Stomach (tissue), 19 donors: ENCODE measurements at regions of chr9 and their contacts with region 1.

Region 1: GRCh38 chr9:87342743-87343142 is 154.9 kb upstream of the DAPK1 start:
- DNase-seq: peak in 1 of 2 donors; percentile 60
- H3K4me3 ChIP-seq: no peak overlapping the region
- H3K27ac ChIP-seq: peak overlapping the region in 1 of 5 donors; percentile 11
- H3K4me1 ChIP-seq: peaks cover 0 to 18% (median 4%) of the 10 kb centered on the region in 4 donors
- H3K27me3 ChIP-seq: peaks cover 0 to 4% (median 0%) of the 10 kb centered on the region in 3 donors
- CTCF ChIP-seq: no peak
- EP300 ChIP-seq: no peak
- POLR2A ChIP-seq: no peak

Region 2: DNA sequence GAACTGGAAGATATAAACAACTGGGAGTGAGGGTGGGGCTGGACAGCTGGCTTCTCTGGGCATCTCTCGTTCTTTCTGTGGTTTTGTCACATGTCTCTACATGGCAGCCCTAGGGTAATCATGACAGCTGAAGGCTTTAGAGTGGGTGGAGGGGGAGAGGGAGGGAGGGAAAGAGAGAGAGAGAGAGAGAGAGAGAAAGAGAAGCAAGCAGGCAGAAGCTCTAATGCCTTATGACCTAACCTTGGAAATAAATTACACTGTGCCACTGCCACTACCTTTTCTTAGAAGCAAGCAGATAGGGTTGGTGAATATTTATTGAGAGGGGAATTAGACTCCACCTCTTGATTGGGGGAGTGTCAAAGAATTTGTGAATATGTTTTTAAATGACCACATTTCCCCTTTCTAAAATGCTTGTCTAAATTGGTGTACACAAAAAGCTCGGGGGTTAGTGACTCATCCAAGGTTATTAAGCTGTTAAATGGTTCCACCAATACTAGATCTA is 152.3 kb after region 1 on chr9:
- intact Hi-C with region 1: loop called (anchors 5 kb)
- DNase-seq: no peak
- H3K4me3 ChIP-seq: no peak overlapping the region
- H3K27ac ChIP-seq: no peak overlapping the region
- H3K4me1 ChIP-seq: peaks cover 0 to 27% (median 25%) of the 10 kb centered on the region in 4 donors
- H3K27me3 ChIP-seq: peaks cover 0 to 9% (median 8%) of the 10 kb centered on the region in 3 donors
- CTCF ChIP-seq: no peak
- EP300 ChIP-seq: no peak
- POLR2A ChIP-seq: no peak

Region 3: GRCh38 chr9:87667202-87667601 is 324.5 kb after region 1 on chr9:
- intact Hi-C with region 1: loop called (anchors 5 kb)
- DNase-seq: peak in 1 of 2 donors; percentile 42
- H3K4me3 ChIP-seq: no peak overlapping the region
- H3K27ac ChIP-seq: no peak overlapping the region
- H3K4me1 ChIP-seq: peaks cover 0 to 5% (median 2%) of the 10 kb centered on the region in 4 donors
- H3K27me3 ChIP-seq: no peaks in the 10 kb centered on the region
- CTCF ChIP-seq: no peak
- EP300 ChIP-seq: no peak
- POLR2A ChIP-seq: no peak